Caco-2 (cell line): ENCODE measurements at regions of chr2 and their contacts with region 1.

Region 1: DNA sequence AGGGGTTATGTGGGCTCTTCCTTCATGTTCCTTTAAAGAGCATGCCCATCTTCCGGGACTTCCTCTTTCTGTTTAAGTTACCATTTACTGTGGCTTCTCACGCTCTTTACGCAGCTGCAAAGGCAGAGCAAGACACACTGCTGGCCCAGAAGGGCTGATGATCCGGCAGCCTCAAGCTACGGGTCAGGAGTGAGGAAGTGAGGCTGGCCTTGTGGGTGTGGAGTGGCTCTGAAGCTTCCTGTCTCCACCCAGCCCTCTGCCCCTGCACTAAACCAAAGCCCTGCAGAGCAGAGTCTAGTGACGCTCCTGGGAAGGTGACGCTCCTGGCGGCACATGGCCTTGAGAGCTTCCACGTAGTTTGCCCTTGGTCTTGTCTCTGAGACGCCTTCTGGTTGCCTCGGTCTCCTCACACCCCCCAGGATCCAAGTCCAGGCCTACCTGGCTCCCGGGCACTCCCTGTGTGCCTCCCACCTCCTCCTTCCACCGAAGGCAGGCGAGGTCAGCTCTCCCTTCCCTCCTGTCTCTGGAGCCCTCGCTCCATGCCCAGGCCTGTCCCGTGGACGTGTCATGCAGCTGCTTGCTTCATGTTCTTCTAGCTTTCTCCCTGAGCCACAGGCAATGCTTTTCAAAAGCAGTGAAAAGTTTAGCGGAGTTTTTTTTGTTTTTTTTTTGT is 50.3 kb downstream of the ARL4C start:
- DNase-seq: no peak
- H3K4me3 ChIP-seq: no peak overlapping the region
- H3K4me3 Mint-ChIP-seq: no peak overlapping the region
- H3K27ac Mint-ChIP-seq: peak overlapping the region; percentile 89
- H3K4me1 ChIP-seq: peaks cover 39% of the 10 kb centered on the region
- H3K4me1 Mint-ChIP-seq: peaks cover 15% of the 10 kb centered on the region
- H3K27me3 ChIP-seq: no peaks in the 10 kb centered on the region
- H3K27me3 Mint-ChIP-seq: no peaks in the 10 kb centered on the region
- CTCF ChIP-seq: no peak

Region 2: DNA sequence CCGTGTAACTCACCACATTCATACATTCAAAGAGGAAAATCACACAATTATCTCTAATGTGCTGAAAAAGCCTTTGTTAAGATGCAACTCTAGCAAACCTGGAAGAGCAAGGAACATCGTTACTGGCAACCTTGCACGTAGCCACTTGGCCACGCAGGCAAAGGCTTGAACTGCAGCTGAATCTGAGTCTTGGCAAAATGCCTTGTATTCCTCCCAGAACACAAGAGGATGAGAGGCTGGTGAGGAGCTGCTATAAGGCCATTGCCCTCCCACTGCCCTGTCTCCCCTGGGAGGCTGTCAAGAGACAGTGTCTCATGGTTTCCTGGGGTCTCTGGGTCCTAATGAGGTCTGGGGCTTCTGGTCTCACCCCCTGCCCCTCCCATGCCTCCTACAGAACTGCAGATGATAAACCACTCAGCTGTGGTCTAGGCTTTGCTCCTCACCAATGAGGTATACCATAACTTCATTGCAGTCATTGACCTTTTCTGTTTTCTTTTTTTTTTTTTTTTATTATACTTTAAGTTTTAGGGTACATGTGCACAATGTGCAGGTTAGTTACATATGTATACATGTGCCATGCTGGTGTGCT is 254.6 kb before region 1 on chr2:
- CTCF ChIA-PET with region 1: no interaction called
- POLR2A ChIA-PET with region 1: no interaction called
- intact Hi-C with region 1: loop called (anchors 5 kb)
- DNase-seq: no peak
- H3K4me3 ChIP-seq: no peak overlapping the region
- H3K4me3 Mint-ChIP-seq: no peak overlapping the region
- H3K27ac Mint-ChIP-seq: no peak overlapping the region
- H3K4me1 ChIP-seq: peaks cover 22% of the 10 kb centered on the region
- H3K4me1 Mint-ChIP-seq: peaks cover 28% of the 10 kb centered on the region
- H3K27me3 ChIP-seq: no peaks in the 10 kb centered on the region
- H3K27me3 Mint-ChIP-seq: no peaks in the 10 kb centered on the region
- CTCF ChIP-seq: no peak

Region 3: DNA sequence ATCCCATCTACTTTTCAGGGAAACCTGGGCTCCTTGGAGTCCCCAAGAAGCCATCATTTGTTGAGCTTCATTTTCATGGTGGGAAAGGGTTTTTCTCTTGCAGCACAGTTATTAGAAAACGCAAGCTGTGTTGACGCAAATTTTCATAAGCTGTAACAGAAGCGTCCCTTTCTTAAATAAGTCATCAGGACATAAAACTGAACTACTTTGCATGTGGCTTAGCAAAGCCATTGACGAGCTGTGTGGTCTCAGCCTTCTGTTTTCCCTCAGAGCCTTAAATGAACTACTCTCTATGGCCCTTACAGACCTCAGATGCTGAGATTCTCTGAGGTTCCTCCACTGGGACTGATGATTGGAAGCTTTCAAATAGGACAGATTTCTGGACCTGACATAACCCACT is 34.7 kb before region 1 on chr2:
- CTCF ChIA-PET with region 1: no interaction called
- POLR2A ChIA-PET with region 1: interaction called, 6 read pairs
- intact Hi-C with region 1: loop called (anchors 1 kb)
- DNase-seq: no peak
- H3K4me3 ChIP-seq: no peak overlapping the region
- H3K4me3 Mint-ChIP-seq: no peak overlapping the region
- H3K27ac Mint-ChIP-seq: peak overlapping the region; percentile 94
- H3K4me1 ChIP-seq: peaks cover 44% of the 10 kb centered on the region
- H3K4me1 Mint-ChIP-seq: peaks cover 36% of the 10 kb centered on the region
- H3K27me3 ChIP-seq: no peaks in the 10 kb centered on the region
- H3K27me3 Mint-ChIP-seq: no peaks in the 10 kb centered on the region
- CTCF ChIP-seq: no peak

Region 4: DNA sequence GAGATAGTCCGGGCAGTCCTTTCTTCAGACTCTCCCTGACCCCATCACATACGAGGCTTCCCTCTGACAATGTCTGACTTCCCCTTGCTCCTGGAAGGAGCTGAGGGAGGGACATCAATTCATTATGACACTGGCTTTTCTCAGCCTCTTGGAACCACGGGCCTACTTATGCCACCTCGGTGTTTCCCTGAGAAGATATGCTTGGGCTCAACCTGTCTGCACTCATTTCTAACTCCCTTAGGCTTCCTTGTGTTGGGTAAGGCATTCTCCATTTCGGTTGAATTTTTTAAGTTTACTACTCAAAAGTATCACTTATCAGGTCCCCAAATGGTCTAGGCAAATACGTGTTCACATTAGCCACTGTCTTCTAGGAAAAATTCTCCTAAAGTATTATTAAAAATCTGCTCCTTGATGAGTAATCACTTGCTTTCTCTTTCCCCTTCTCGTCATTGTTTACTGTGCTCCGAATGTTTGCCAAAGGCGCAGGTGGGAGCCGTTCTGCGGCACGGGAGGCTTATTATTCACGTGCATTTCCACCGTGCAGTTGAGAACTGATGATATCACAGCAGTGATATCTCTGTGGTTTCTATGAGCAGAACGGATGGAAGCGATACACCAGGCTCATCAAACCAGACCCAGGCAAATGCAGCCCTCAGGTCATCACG is 17.2 kb after region 1 on chr2:
- CTCF ChIA-PET with region 1: interaction called, 3 read pairs
- POLR2A ChIA-PET with region 1: interaction called, 3 read pairs
- intact Hi-C with region 1: loop called (anchors 1 kb)
- DNase-seq: peak; percentile 51 to 67
- H3K4me3 ChIP-seq: no peak overlapping the region
- H3K4me3 Mint-ChIP-seq: peak overlapping the region; percentile 47
- H3K27ac Mint-ChIP-seq: peak overlapping the region; percentile 95
- H3K4me1 ChIP-seq: peaks cover 70% of the 10 kb centered on the region
- H3K4me1 Mint-ChIP-seq: peaks cover 33% of the 10 kb centered on the region
- H3K27me3 ChIP-seq: no peaks in the 10 kb centered on the region
- H3K27me3 Mint-ChIP-seq: no peaks in the 10 kb centered on the region
- CTCF ChIP-seq: no peak

Region 5: GRCh38 chr2:234494361-234495250 is 48.1 kb after region 1 on chr2:
- CTCF ChIA-PET with region 1: no interaction called
- POLR2A ChIA-PET with region 1: interaction called, 3 read pairs
- intact Hi-C with region 1: loop called (anchors 5 kb)
- DNase-seq: no peak
- H3K4me3 ChIP-seq: peak overlapping the region; percentile 96
- H3K4me3 Mint-ChIP-seq: peak overlapping the region; percentile 95
- H3K27ac Mint-ChIP-seq: peak overlapping the region; percentile 91
- H3K4me1 ChIP-seq: peaks cover 6% of the 10 kb centered on the region
- H3K4me1 Mint-ChIP-seq: no peaks in the 10 kb centered on the region
- H3K27me3 ChIP-seq: no peaks in the 10 kb centered on the region
- H3K27me3 Mint-ChIP-seq: no peaks in the 10 kb centered on the region
- CTCF ChIP-seq: no peak